Right cardiac atrium (tissue), 5 donors: ENCODE measurements at regions of chr19 and their contacts with region 1.

Region 1: DNA sequence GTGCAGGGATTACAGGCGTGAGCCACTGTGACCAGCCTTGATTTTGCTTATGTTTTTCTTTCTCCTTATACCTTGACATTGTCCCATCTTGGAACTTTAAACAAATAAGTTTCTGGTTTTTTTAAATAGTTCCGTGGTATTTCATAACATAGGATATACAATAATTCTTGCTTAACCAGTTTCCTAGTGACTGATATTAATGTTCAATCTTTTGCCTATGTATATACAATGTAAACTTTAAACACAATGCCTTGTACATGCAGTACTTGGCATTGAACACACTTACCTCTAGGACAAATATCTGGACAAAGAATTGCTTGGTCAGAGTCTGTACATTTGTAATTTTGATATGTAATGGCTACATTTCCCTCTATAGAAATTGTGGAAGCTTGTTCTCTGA is 24.4 kb upstream of the SPACA4 start:
- DNase-seq: no peak
- ATAC-seq: no peak
- H3K4me3 ChIP-seq: no peak overlapping the region
- H3K27ac ChIP-seq: no peak overlapping the region
- H3K4me1 ChIP-seq: no peaks in the 10 kb centered on the region
- H3K27me3 ChIP-seq: no peaks in the 10 kb centered on the region

Region 2: GRCh38 chr19:48492925-48493717 is 89.0 kb before region 1 on chr19:
- intact Hi-C with region 1: loop called in 3 of 4 experiments (anchors 5 kb)
- DNase-seq: peak; percentile 98 to 99 (median 98)
- ATAC-seq: peak; percentile 92 to 93
- H3K4me3 ChIP-seq: peak overlapping the region; percentile 71
- H3K27ac ChIP-seq: peak overlapping the region; percentile 28
- H3K4me1 ChIP-seq: no peaks in the 10 kb centered on the region
- H3K27me3 ChIP-seq: no peaks in the 10 kb centered on the region

Region 3: DNA sequence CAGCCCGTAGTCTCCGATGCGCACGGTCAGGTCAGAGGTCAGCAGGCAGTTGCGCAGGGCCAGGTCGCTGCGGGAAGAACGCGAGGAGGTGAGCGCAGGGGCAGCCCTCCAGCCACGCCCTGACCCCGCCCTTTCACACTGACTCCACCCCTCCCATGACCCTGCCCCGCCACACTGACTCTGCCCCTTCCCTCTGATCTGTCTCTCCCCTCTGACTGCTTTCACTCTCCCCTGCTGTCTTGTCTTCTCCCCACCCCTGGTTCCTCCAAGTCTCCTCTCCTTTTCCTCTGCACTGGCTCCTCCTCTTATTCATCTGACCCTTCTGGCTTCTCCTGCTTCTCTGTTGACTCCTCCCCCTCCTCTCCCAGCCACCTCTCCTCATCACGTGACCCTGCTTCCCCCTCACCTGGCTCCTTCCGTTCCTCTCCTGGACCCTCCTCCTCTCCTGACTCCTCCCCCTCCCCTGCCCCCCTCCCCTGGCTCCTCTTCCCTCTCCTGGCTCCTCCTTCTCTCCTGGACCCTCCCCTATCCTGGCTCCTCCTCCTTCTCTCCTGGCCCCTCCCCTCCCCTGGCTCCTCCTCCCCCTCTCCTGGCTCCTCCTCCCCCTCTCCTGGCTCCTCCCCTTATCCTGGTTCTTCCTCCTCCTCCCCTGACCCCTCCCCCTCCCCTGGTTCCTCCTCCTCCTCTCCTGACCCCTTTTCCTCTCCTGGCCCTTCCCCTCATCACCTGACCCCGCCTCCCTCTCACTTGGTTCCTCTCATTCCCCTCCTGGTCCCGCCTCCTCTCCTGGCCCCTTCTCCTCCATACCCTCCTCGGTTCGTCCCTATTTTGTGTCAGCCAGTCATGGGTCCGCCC is 80.4 kb before region 1 on chr19:
- intact Hi-C with region 1: loop called in 3 of 4 experiments (anchors 2 to 5 kb)
- DNase-seq: peak; percentile 46 to 80 (median 70)
- ATAC-seq: peak; percentile 38 to 55
- H3K4me3 ChIP-seq: no peak overlapping the region
- H3K27ac ChIP-seq: no peak overlapping the region
- H3K4me1 ChIP-seq: no peaks in the 10 kb centered on the region
- H3K27me3 ChIP-seq: no peaks in the 10 kb centered on the region